Mammary epithelial cell (primary cell): ENCODE measurements at regions of chr14 and their contacts with region 1.

Region 1: DNA sequence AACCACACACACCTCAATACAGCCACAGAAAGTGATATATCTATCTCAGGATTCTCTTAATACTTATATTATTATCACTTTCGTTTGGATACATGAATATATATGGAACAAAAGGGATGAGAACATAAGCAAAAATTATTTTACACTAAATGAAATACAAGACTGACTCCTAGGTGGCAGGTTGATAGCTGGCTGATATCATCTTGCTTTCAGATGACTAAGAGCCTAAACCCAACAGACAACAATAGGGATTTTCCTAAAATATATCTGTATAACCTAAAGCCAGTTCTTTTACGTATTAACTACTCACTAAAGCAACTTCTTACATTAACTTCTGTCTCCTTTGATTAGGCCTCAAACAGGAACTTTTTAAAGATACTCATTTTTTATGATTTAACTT is 65.1 kb downstream of the BAZ1A start:
- DNase-seq: no peak
- H3K4me3 ChIP-seq: no peak overlapping the region
- H3K27ac ChIP-seq: no peak overlapping the region
- H3K4me1 ChIP-seq: no peaks in the 10 kb centered on the region
- H3K27me3 ChIP-seq: no peaks in the 10 kb centered on the region
- CTCF ChIP-seq: no peak

Region 2: GRCh38 chr14:34843011-34843554 is 33.1 kb after region 1 on chr14:
- CTCF ChIA-PET with region 1: no interaction called
- dilution Hi-C with region 1: no loop called
- in situ Hi-C with region 1: no loop called
- intact Hi-C with region 1: no loop called
- DNase-seq: peak; percentile 97
- H3K4me3 ChIP-seq: no peak overlapping the region
- H3K27ac ChIP-seq: peak overlapping the region; percentile 42
- H3K4me1 ChIP-seq: peaks cover 18% of the 10 kb centered on the region
- H3K27me3 ChIP-seq: no peaks in the 10 kb centered on the region
- CTCF ChIP-seq: no peak

Region 3: DNA sequence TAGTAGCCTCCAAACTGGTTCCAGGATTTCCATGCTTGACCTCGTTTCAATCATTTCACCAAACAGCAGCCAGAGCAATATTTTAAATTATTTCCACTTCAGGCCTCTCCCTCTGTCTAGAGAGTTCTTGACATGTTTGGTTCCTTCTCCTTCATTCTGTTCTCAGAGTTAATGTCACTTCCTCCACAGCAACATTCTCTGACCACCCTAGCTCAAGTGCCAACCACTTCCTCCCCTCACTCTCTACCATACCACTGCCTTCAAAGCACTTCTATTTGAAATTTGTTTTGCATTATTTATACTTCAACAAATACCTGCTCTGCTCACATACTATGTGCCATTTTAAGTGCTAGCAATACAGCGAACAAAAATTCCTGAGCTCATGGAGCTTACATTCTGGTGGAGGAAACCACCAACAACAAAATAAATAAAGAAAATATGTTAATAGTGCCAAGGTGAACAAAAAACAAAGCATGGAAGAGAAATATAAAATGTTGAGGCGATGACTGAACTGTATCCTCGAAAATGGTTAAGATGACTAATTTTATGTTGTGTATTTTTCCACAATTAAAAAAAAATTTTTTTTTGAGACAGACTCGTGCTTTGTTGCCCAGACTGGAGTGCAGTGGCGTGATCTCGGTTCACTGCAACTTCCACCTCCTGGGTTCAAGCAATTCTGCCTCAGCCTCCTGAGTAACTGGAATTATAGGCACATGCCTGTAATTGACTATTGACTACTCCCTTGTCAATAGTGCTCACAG is 47.8 kb after region 1 on chr14:
- CTCF ChIA-PET with region 1: no interaction called
- dilution Hi-C with region 1: no loop called
- in situ Hi-C with region 1: no loop called
- intact Hi-C with region 1: no loop called
- DNase-seq: no peak
- H3K4me3 ChIP-seq: no peak overlapping the region
- H3K27ac ChIP-seq: no peak overlapping the region
- H3K4me1 ChIP-seq: no peaks in the 10 kb centered on the region
- H3K27me3 ChIP-seq: no peaks in the 10 kb centered on the region
- CTCF ChIP-seq: no peak

Region 4: GRCh38 chr14:34875031-34875922 is 65.2 kb after region 1 on chr14 and contains the start of gene BAZ1A:
- CTCF ChIA-PET with region 1: no interaction called
- dilution Hi-C with region 1: no loop called
- in situ Hi-C with region 1: no loop called
- intact Hi-C with region 1: no loop called
- DNase-seq: peak; percentile 93
- H3K4me3 ChIP-seq: peak within 1 kb of the TSS; percentile 74 to 98 (median 74)
- H3K27ac ChIP-seq: peak within 1 kb of the TSS; percentile 98
- H3K4me1 ChIP-seq: peaks cover 14% of the 10 kb centered on the region
- H3K27me3 ChIP-seq: no peaks in the 10 kb centered on the region
- CTCF ChIP-seq: no peak
- total RNA-seq, gene BAZ1A: 25.0 to 42.3 TPM

Region 5: DNA sequence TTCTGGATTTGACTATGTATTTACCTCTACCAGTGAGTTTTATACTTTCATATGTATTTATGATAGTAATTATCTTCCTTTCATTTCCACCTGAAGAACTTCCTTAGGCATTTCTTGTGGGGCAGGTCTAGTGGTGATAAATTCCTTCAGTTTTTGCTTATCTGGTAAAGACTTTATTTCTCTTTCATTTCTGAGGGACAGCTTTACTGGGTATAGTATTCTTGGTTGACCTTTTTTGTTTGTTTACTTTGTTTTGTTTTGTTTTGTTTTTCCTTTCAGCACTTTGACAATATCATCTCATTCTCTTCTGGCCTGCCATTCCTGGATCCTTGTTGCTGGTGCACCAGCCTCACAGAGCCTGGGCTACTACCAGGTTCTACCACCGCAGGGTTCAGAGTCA is 648.4 kb after region 1 on chr14:
- CTCF ChIA-PET with region 1: interaction called, 10 read pairs
- dilution Hi-C with region 1: no loop called
- in situ Hi-C with region 1: no loop called
- intact Hi-C with region 1: no loop called
- DNase-seq: no peak
- H3K4me3 ChIP-seq: no peak overlapping the region
- H3K27ac ChIP-seq: no peak overlapping the region
- H3K4me1 ChIP-seq: no peaks in the 10 kb centered on the region
- H3K27me3 ChIP-seq: no peaks in the 10 kb centered on the region
- CTCF ChIP-seq: no peak